GM10248 (cell line): ENCODE measurements at regions of chr17 and their contacts with region 1.

Region 1: GRCh38 chr17:29533976-29534375 is 32.9 kb downstream of the ABHD15 start:
- DNase-seq: no peak
- CTCF ChIP-seq: no peak

Region 2: DNA sequence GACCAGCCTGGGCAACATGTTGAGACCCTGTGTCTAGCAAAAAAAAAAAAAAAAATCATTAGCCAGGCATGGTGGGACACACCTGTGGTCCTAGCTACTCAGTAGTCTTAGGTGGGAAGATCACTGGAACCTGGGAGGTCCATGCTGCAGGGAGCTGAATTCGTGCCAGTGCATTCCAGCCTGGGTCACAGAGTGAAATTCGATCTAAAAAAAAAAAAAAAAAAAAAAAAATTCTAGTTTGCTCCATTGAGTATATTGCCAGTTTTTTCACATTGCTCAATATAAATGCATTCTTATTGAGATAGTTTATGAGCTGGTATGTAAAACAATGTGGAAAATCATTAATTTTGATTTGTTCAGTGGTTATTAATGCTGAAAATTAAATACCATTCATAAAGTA is 19.2 kb before region 1 on chr17:
- CTCF ChIA-PET with region 1: interaction called, 10 read pairs
- POLR2A ChIA-PET with region 1: no interaction called
- DNase-seq: no peak
- CTCF ChIP-seq: no peak

Region 3: GRCh38 chr17:29549177-29549923 is 15.4 kb after region 1 on chr17:
- CTCF ChIA-PET with region 1: interaction called, 27 read pairs
- POLR2A ChIA-PET with region 1: no interaction called
- DNase-seq: peak; percentile 55
- CTCF ChIP-seq: no peak

Region 4: DNA sequence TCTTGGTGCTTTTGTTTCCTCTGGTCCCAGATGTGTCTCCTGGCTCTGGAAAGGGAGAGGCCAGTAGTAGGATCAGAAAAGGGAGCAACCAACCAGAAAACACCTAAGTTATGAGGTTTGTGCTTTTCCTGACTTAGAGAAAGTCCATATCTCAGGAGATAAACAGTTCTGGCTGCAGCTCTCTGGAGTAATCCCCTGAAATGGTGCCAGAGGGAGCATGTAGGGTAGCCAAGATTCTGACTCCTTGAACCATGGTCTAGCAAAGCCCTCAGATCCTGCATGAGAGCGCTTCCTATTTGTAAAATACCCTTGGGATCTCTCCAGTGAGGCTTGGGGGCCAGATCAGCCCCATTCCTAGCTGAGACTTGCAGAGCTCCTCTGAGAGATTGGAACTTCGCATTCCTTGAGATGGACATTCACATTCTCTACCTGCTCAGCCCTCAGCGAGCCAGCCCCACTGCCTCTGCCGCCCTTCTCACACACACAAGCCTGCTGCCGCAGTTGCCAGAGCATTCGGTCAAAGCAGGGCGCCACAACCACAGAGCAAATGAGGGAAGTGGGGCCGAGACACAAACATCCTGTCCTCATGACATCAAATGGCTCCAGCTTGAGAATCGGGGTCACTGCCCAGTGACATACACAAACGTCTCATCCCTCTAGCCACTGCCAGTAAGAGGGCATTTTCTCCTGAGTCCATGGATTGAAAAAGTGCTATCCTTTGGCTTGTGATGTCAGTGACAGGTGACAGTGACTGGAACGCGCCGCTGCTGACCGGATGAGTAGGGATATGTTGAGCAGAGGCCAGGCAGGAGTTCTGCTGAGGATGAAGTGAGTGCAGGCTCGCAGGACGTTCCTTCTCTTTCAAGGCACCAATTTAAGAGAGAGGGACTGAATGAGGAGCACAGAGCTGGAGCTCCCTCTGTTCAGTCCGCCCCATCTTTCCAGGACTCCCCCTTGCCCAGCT is 27.9 kb after region 1 on chr17:
- CTCF ChIA-PET with region 1: interaction called, 10 read pairs
- POLR2A ChIA-PET with region 1: no interaction called
- DNase-seq: no peak
- CTCF ChIP-seq: no peak

Region 5: GRCh38 chr17:29645515-29646051 is 111.6 kb after region 1 on chr17:
- CTCF ChIA-PET with region 1: no interaction called
- POLR2A ChIA-PET with region 1: no interaction called
- DNase-seq: no peak
- CTCF ChIP-seq: no peak